PC-3 (cell line): ENCODE measurements at regions of chr5 and their contacts with region 1.

Region 1: GRCh38 chr5:74042959-74043358 is 417.0 kb downstream of the ARHGEF28 start:
- DNase-seq: peak; percentile 41
- ATAC-seq: peak; percentile 63; the same call in 1 of the 2 replicates
- H3K4me3 ChIP-seq: no peak overlapping the region
- H3K27ac ChIP-seq: no peak overlapping the region
- H3K4me1 ChIP-seq: peaks cover 13% of the 10 kb centered on the region
- H3K27me3 ChIP-seq: no peaks in the 10 kb centered on the region
- CTCF ChIP-seq: no peak

Region 2: DNA sequence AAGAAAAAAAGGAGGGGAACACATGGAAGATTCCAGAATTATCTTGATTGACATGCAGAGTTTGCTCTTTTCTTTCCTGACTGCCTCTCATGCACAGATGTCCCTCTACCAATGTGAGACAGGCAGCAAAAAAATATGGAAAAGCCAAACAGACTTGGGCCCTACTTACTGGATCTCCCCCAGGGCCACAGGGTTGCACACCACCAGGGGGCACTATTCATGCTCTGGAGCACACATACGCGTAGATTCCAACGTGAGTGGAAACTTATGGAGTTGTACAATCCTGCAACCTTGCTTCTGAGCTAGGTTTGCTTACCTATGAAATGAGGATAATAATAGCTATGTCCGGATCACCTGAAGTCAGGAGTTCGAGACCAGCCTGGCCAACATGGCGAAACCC is 97.5 kb before region 1 on chr5:
- CTCF ChIA-PET with region 1: no interaction called
- POLR2A ChIA-PET with region 1: no interaction called
- intact Hi-C with region 1: no loop called
- DNase-seq: no peak
- ATAC-seq: no peak
- H3K4me3 ChIP-seq: no peak overlapping the region
- H3K27ac ChIP-seq: no peak overlapping the region
- H3K4me1 ChIP-seq: 0 out of 2 replicates have a peak, but pooled peaks cover 5% of the 10 kb centered on the region
- H3K27me3 ChIP-seq: no peaks in the 10 kb centered on the region
- CTCF ChIP-seq: peak; percentile 51

Region 3: GRCh38 chr5:74143721-74144330 is 100.9 kb after region 1 on chr5:
- CTCF ChIA-PET with region 1: interaction called, 20 read pairs
- POLR2A ChIA-PET with region 1: no interaction called
- intact Hi-C with region 1: no loop called
- DNase-seq: no peak
- ATAC-seq: no peak
- H3K4me3 ChIP-seq: no peak overlapping the region
- H3K27ac ChIP-seq: no peak overlapping the region
- H3K4me1 ChIP-seq: peaks cover 22% of the 10 kb centered on the region
- H3K27me3 ChIP-seq: no peaks in the 10 kb centered on the region
- CTCF ChIP-seq: no peak

Region 4: DNA sequence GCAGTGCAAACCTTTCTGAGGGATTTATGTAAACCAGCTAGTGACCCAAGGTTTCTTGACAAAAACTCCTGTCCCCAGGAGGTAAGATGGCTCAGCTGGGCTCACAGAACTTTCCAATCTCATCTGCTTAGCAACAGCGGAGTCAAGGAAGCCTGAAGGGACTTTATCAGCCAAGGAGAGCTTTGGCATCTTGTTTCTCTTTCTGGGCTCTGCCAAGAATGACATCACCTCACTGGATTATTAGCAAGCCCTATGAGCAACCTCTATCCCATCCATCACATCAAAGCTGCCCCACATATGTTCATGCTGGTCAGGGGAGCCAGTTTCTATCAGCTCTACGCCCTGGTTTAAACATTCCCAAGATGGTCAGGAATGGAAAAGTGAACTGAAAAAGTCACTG is 136.2 kb after region 1 on chr5:
- CTCF ChIA-PET with region 1: no interaction called
- POLR2A ChIA-PET with region 1: no interaction called
- intact Hi-C with region 1: no loop called
- DNase-seq: no peak
- ATAC-seq: no peak
- H3K4me3 ChIP-seq: no peak overlapping the region
- H3K27ac ChIP-seq: no peak overlapping the region
- H3K4me1 ChIP-seq: no peaks in the 10 kb centered on the region
- H3K27me3 ChIP-seq: no peaks in the 10 kb centered on the region
- CTCF ChIP-seq: no peak